Sigmoid colon (tissue), 7 donors: ENCODE measurements at regions of chr3 and their contacts with region 1.

Region 1: GRCh38 chr3:66554178-66554577 is 53.4 kb upstream of the LRIG1 start:
- DNase-seq: no peak
- H3K4me3 ChIP-seq: no peak overlapping the region
- H3K27ac ChIP-seq: peak overlapping the region in 2 of 4 donors; percentile 79 to 82
- H3K4me1 ChIP-seq: peaks cover 2 to 42% (median 34%) of the 10 kb centered on the region in 4 donors
- H3K27me3 ChIP-seq: no peaks in the 10 kb centered on the region
- CTCF ChIP-seq: no peak
- EP300 ChIP-seq: no peak
- POLR2A ChIP-seq: no peak

Region 2: GRCh38 chr3:66407611-66408218 is 146.5 kb before region 1 on chr3:
- intact Hi-C with region 1: loop called (anchors 10 kb)
- DNase-seq: peak; percentile 86
- H3K4me3 ChIP-seq: no peak overlapping the region
- H3K27ac ChIP-seq: peak overlapping the region; percentile 73 to 95 (median 86)
- H3K4me1 ChIP-seq: peaks cover 0 to 100% (median 99%) of the 10 kb centered on the region in 4 donors
- H3K27me3 ChIP-seq: no peaks in the 10 kb centered on the region
- CTCF ChIP-seq: peak; percentile 68 to 90 (median 86)
- EP300 ChIP-seq: no peak
- POLR2A ChIP-seq: no peak

Region 3: GRCh38 chr3:66423791-66424190 is 130.4 kb before region 1 on chr3:
- intact Hi-C with region 1: loop called (anchors 1 kb)
- DNase-seq: peak; percentile 88
- H3K4me3 ChIP-seq: no peak overlapping the region
- H3K27ac ChIP-seq: peak overlapping the region; percentile 65 to 95 (median 86)
- H3K4me1 ChIP-seq: peaks cover 0 to 95% (median 86%) of the 10 kb centered on the region in 4 donors
- H3K27me3 ChIP-seq: no peaks in the 10 kb centered on the region
- CTCF ChIP-seq: no peak
- EP300 ChIP-seq: peak in 3 of 4 donors; percentile 11 to 72 (median 50)
- POLR2A ChIP-seq: no peak

Region 4: GRCh38 chr3:66615643-66616301 is 61.6 kb after region 1 on chr3:
- intact Hi-C with region 1: loop called (anchors 5 kb)
- DNase-seq: no peak
- H3K4me3 ChIP-seq: no peak overlapping the region
- H3K27ac ChIP-seq: peak overlapping the region in 3 of 4 donors; percentile 53 to 74 (median 72)
- H3K4me1 ChIP-seq: peaks cover 0 to 36% (median 30%) of the 10 kb centered on the region in 4 donors
- H3K27me3 ChIP-seq: no peaks in the 10 kb centered on the region
- CTCF ChIP-seq: no peak
- EP300 ChIP-seq: no peak
- POLR2A ChIP-seq: no peak

Region 5: GRCh38 chr3:66703501-66703900 is 149.3 kb after region 1 on chr3:
- intact Hi-C with region 1: loop called (anchors 2 kb)
- DNase-seq: no peak
- H3K4me3 ChIP-seq: no peak overlapping the region
- H3K27ac ChIP-seq: peak overlapping the region in 3 of 4 donors; percentile 68 to 83 (median 80)
- H3K4me1 ChIP-seq: peaks cover 0 to 59% (median 53%) of the 10 kb centered on the region in 4 donors
- H3K27me3 ChIP-seq: no peaks in the 10 kb centered on the region
- CTCF ChIP-seq: no peak
- EP300 ChIP-seq: no peak
- POLR2A ChIP-seq: no peak

Region 6: DNA sequence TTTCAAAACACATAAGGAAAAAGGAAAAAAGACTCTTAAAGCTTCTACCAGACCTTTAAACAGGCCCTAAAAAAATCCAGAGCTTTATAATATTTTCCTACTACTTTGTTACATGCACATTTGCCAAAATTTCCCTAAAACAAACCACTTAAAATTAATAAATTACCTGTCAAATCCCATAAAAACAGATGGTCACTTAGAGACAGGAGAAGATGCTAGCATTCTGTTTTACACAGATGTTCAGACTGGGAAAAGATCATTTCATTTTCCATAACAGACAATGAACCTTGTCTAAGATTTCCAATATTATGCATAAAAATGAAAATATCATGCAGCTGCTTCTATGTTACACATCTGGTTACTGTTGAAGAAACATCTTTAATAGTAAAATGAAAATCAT is 1033.6 kb after region 1 on chr3:
- intact Hi-C with region 1: no loop called
- DNase-seq: no peak
- H3K4me3 ChIP-seq: no peak overlapping the region
- H3K27ac ChIP-seq: no peak overlapping the region
- H3K4me1 ChIP-seq: peaks cover 0 to 16% (median 5%) of the 10 kb centered on the region in 4 donors
- H3K27me3 ChIP-seq: no peaks in the 10 kb centered on the region
- CTCF ChIP-seq: no peak
- EP300 ChIP-seq: no peak
- POLR2A ChIP-seq: no peak